ENCODE measurements at regions of chr20 and their contacts with region 1.

Region 1: DNA sequence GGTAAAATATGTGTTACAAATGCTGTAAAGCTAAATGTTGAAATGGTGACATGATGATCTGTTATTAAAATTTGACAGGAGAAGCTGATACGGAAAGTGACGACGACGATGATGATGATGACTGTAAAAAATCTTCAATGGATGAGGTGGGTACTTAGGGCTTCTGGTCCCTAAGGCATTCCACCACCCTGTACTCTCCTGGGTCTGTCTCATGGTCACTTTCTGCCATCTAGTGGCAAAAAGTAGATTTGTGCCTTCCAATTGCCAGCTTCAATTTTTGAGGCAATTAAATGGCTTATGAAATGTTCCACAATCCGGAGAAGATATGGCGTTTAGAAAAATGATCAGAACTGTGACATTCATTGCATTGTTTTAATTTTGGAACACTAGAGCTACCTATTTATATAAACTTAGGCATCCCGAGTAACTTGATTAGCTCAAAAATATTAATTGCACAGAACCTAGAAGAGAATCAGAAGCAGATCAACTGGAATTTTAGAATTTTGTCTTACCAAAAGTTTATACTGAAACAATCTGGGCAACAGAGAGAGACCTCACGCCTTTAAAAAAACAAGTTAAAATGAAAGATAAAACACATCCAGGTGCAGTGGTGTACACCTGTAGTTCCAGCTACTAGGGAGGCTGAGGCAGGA is 346.5 kb upstream of the PLCB4 start:
- DNase-seq: peak; percentile 75
- H3K4me3 Mint-ChIP-seq: no peak overlapping the region
- H3K27ac Mint-ChIP-seq: no peak overlapping the region
- H3K4me1 Mint-ChIP-seq: peaks cover 11% of the 10 kb centered on the region
- H3K27me3 Mint-ChIP-seq: no peaks in the 10 kb centered on the region
- CTCF ChIP-seq: peak; percentile 75

Region 2: GRCh38 chr20:7926767-7927166 is 795.6 kb before region 1 on chr20:
- CTCF ChIA-PET with region 1: interaction called, 277 read pairs
- POLR2A ChIA-PET with region 1: interaction called, 3 read pairs
- intact Hi-C with region 1: no loop called
- DNase-seq: peak; percentile 50
- H3K4me3 Mint-ChIP-seq: no peak overlapping the region
- H3K27ac Mint-ChIP-seq: no peak overlapping the region
- H3K4me1 Mint-ChIP-seq: peaks cover 9% of the 10 kb centered on the region
- H3K27me3 Mint-ChIP-seq: no peaks in the 10 kb centered on the region
- CTCF ChIP-seq: peak; percentile 59

Region 3: GRCh38 chr20:7967199-7967844 is 755.1 kb before region 1 on chr20:
- CTCF ChIA-PET with region 1: interaction called, 31 read pairs
- POLR2A ChIA-PET with region 1: no interaction called
- intact Hi-C with region 1: no loop called
- DNase-seq: peak; percentile 34
- H3K4me3 Mint-ChIP-seq: no peak overlapping the region
- H3K27ac Mint-ChIP-seq: peak overlapping the region; percentile 3
- H3K4me1 Mint-ChIP-seq: peaks cover 5% of the 10 kb centered on the region
- H3K27me3 Mint-ChIP-seq: no peaks in the 10 kb centered on the region
- CTCF ChIP-seq: no peak

Region 4: GRCh38 chr20:8033151-8033841 is 689.1 kb before region 1 on chr20:
- CTCF ChIA-PET with region 1: interaction called, 56 read pairs
- POLR2A ChIA-PET with region 1: no interaction called
- intact Hi-C with region 1: no loop called
- DNase-seq: no peak
- H3K4me3 Mint-ChIP-seq: no peak overlapping the region
- H3K27ac Mint-ChIP-seq: no peak overlapping the region
- H3K4me1 Mint-ChIP-seq: no peaks in the 10 kb centered on the region
- H3K27me3 Mint-ChIP-seq: no peaks in the 10 kb centered on the region
- CTCF ChIP-seq: no peak

Region 5: DNA sequence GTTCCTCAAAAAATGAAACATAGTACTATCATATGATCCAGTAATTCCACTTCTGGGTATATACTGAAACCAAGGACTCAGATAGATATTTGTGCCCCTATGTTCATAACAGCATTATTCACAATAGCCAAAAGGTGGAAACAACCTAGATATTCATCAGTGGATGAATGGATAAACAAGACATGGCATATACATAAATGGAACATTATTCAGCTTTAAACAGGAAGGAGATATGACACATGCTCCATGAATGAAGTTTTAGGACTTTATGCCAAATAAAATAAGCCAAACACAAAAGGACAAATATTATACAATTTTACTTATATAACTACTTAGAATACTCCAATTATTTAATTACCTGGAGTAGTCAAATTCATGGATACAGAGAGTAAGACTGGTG is 573.9 kb before region 1 on chr20:
- CTCF ChIA-PET with region 1: interaction called, 16 read pairs
- POLR2A ChIA-PET with region 1: no interaction called
- intact Hi-C with region 1: no loop called
- DNase-seq: peak; percentile 11
- H3K4me3 Mint-ChIP-seq: no peak overlapping the region
- H3K27ac Mint-ChIP-seq: no peak overlapping the region
- H3K4me1 Mint-ChIP-seq: peaks cover 39% of the 10 kb centered on the region
- H3K27me3 Mint-ChIP-seq: no peaks in the 10 kb centered on the region
- CTCF ChIP-seq: no peak

Region 6: DNA sequence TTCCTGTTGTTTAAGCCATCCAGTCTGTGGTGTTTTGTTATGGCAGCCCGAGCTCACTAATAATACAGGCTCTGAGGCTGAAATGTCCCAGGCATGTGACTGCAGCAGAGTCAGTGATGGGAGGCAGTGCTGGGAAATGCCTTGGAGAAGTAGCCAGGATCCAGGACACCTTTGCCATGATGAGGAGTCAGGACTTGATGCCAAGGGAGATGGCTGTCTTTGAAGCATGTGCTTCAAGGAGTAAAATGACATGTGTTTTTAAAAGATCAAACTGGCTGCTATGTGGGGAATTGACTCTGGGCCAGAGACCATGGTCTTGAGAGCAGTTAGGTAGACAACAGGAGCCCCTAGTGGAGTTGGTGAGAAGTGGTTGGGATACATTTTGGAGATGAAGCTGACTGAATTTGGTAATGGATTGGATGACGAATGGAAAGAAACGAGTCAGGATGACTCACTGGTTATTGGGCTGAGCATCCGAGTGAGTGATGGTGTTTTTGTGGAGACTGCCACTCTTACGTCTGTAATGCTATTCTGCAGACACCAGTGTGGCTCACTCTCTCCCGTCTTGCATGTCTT is 268.2 kb before region 1 on chr20:
- CTCF ChIA-PET with region 1: interaction called, 3 read pairs
- POLR2A ChIA-PET with region 1: no interaction called
- intact Hi-C with region 1: loop called (anchors 5 kb)
- DNase-seq: peak; percentile 85
- H3K4me3 Mint-ChIP-seq: no peak overlapping the region
- H3K27ac Mint-ChIP-seq: no peak overlapping the region
- H3K4me1 Mint-ChIP-seq: peaks cover 9% of the 10 kb centered on the region
- H3K27me3 Mint-ChIP-seq: no peaks in the 10 kb centered on the region
- CTCF ChIP-seq: peak; percentile 33

Region 7: DNA sequence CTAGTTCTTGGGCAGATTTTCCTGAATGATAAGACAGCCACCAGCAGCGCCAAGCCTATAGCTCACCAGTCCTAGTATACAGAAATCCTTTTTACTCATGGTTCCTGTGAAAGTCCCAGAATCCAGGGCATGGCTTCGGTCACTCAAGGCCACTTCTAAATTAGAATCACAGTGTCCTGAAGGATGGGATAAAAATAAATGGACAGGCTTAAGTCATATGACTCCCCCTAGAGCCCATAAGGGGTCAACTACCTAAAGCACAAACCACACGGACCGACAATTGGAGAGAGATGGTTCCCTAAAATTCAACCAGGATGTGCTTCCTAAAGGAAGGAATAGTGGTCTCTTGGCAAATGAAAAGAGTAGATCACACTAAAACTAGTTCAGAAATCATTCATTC is 57.6 kb before region 1 on chr20:
- CTCF ChIA-PET with region 1: interaction called, 13 read pairs
- POLR2A ChIA-PET with region 1: no interaction called
- intact Hi-C with region 1: no loop called
- DNase-seq: no peak
- H3K4me3 Mint-ChIP-seq: no peak overlapping the region
- H3K27ac Mint-ChIP-seq: no peak overlapping the region
- H3K4me1 Mint-ChIP-seq: no peaks in the 10 kb centered on the region
- H3K27me3 Mint-ChIP-seq: no peaks in the 10 kb centered on the region
- CTCF ChIP-seq: no peak

Measured in MCF 10A (cell line).